Calu3 (cell line): ENCODE measurements at regions of chrX and their contacts with region 1.

Region 1: GRCh38 chrX:34918856-34919255 is 23.7 kb upstream of the FAM47B start:
- DNase-seq: peak; percentile 54
- H3K4me3 Mint-ChIP-seq: no peak overlapping the region
- H3K27ac Mint-ChIP-seq: peak overlapping the region; percentile 42
- H3K4me1 Mint-ChIP-seq: peaks cover 31% of the 10 kb centered on the region
- H3K27me3 Mint-ChIP-seq: no peaks in the 10 kb centered on the region
- CTCF ChIP-seq: peak; percentile 56

Region 2: DNA sequence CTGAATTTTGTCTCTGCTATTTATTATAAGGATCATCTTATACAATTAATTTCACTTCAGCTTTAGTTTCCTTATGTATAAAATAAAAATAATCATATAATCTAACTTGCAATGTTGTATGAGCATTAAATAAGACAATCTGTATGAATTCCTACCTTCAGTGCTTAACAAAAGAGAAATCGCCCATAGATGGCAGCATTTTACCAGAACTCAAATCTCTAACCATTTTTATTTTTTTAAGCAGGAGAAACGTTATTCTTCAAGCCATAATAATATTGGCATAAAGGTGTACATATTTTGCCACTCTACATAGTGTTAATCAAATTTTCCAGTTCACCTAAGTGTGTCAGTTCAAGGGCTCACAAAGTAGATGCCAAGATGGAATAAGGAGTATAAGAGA is 340.6 kb before region 1 on chrX:
- CTCF ChIA-PET with region 1: no interaction called
- intact Hi-C with region 1: loop called (anchors 10 kb)
- DNase-seq: peak; percentile 15
- H3K4me3 Mint-ChIP-seq: no peak overlapping the region
- H3K27ac Mint-ChIP-seq: no peak overlapping the region
- H3K4me1 Mint-ChIP-seq: peaks cover 28% of the 10 kb centered on the region
- H3K27me3 Mint-ChIP-seq: no peaks in the 10 kb centered on the region
- CTCF ChIP-seq: no peak

Region 3: DNA sequence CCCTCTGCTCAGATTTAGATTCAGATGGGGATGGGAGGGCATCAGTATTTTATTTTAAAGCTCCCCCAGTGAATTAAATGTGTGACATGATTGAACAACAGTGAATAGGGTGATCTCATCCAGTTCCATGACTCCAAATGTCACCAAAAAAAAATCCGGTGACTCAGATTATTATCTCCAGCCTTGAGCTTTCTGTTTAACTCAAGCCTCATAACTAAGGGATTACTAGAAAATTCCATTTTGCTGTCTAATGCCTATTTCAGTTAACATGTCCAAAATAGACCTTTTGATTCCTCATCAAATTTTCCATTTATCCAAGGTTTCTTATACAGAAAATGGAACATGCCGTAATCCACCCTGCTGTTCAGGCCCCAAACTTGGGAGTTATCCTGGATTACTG is 139.9 kb before region 1 on chrX:
- CTCF ChIA-PET with region 1: no interaction called
- intact Hi-C with region 1: no loop called
- DNase-seq: no peak
- H3K4me3 Mint-ChIP-seq: no peak overlapping the region
- H3K27ac Mint-ChIP-seq: no peak overlapping the region
- H3K4me1 Mint-ChIP-seq: no peaks in the 10 kb centered on the region
- H3K27me3 Mint-ChIP-seq: no peaks in the 10 kb centered on the region
- CTCF ChIP-seq: no peak

Region 4: DNA sequence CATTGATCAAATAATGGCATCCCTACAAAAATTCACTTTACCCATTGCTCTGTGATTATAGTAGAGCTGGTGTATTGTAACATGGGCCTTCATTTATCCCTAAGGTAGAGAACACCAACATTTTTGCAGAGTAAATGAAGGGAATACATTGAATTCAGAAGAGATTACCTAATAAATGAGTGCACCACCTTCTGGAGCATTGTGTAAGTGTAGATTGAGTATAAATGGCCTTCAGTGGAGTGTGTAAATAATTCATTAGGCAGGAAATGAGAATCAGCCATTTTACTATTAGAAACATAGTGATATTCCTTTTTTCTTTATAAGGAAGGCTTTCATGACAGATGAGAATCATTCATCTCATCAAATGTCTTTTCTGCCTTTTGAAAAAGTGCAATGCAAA is 179.6 kb after region 1 on chrX:
- CTCF ChIA-PET with region 1: no interaction called
- intact Hi-C with region 1: loop called (anchors 10 kb)
- DNase-seq: no peak
- H3K4me3 Mint-ChIP-seq: no peak overlapping the region
- H3K27ac Mint-ChIP-seq: no peak overlapping the region
- H3K4me1 Mint-ChIP-seq: no peaks in the 10 kb centered on the region
- H3K27me3 Mint-ChIP-seq: no peaks in the 10 kb centered on the region
- CTCF ChIP-seq: no peak

Region 5: GRCh38 chrX:35439692-35440091 is 520.8 kb after region 1 on chrX:
- CTCF ChIA-PET with region 1: no interaction called
- intact Hi-C with region 1: loop called (anchors 5 kb)
- DNase-seq: peak; percentile 49
- H3K4me3 Mint-ChIP-seq: no peak overlapping the region
- H3K27ac Mint-ChIP-seq: peak overlapping the region; percentile 85
- H3K4me1 Mint-ChIP-seq: peaks cover 28% of the 10 kb centered on the region
- H3K27me3 Mint-ChIP-seq: no peaks in the 10 kb centered on the region
- CTCF ChIP-seq: no peak

Region 6: GRCh38 chrX:36867143-36867542 is 1948.3 kb after region 1 on chrX:
- CTCF ChIA-PET with region 1: no interaction called
- intact Hi-C with region 1: loop called (anchors 5 kb)
- DNase-seq: peak; percentile 14
- H3K4me3 Mint-ChIP-seq: no peak overlapping the region
- H3K27ac Mint-ChIP-seq: no peak overlapping the region
- H3K4me1 Mint-ChIP-seq: peaks cover 8% of the 10 kb centered on the region
- H3K27me3 Mint-ChIP-seq: no peaks in the 10 kb centered on the region
- CTCF ChIP-seq: peak; percentile 40